Activated CD8-positive, alpha-beta T cell treated with anti-CD3 and anti-CD28 coated beads, Interleukin-2, amount 10 ng/mL, durations not matched to agents 7 days and 5 days (primary cell): ENCODE measurements at regions of chr12 and their contacts with region 1.

Region 1: DNA sequence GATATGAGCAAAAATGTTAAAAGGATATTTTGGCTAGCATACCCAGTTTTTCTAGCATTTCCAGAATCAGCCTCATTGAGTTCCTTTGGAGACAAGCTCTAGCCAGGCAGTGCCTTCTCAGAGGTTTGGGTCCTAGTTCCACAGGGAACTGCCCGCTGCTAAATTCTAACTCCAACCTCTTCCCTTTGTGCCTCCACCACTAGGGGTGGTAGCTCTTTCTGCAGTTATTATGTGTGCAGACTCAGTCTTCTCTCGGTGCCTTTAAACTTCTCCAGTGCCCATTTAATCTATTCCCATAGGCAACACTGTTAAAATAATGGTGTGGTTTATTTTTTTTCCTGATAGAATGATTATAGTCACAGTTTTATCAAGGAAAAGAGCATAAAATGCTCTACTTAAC is 21.5 kb upstream of the SLC25A3 start:
- DNase-seq: no peak
- ATAC-seq: no peak
- H3K4me3 Mint-ChIP-seq: no peak overlapping the region
- H3K27ac Mint-ChIP-seq: no peak overlapping the region
- H3K4me1 Mint-ChIP-seq: no peaks in the 10 kb centered on the region
- H3K27me3 Mint-ChIP-seq: no peaks in the 10 kb centered on the region

Region 2: GRCh38 chr12:98532681-98533304 is 39.2 kb before region 1 on chr12:
- CTCF ChIA-PET with region 1: interaction called, 11 read pairs
- POLR2A ChIA-PET with region 1: no interaction called
- DNase-seq: no peak
- ATAC-seq: peak; percentile 62
- H3K4me3 Mint-ChIP-seq: no peak overlapping the region
- H3K27ac Mint-ChIP-seq: no peak overlapping the region
- H3K4me1 Mint-ChIP-seq: peaks cover 21% of the 10 kb centered on the region
- H3K27me3 Mint-ChIP-seq: no peaks in the 10 kb centered on the region

Region 3: GRCh38 chr12:98587084-98587483 is 15.1 kb after region 1 on chr12:
- CTCF ChIA-PET with region 1: interaction called, 34 read pairs
- POLR2A ChIA-PET with region 1: no interaction called
- DNase-seq: no peak
- ATAC-seq: no peak
- H3K4me3 Mint-ChIP-seq: no peak overlapping the region
- H3K27ac Mint-ChIP-seq: no peak overlapping the region
- H3K4me1 Mint-ChIP-seq: no peaks in the 10 kb centered on the region
- H3K27me3 Mint-ChIP-seq: no peaks in the 10 kb centered on the region

Region 4: GRCh38 chr12:98644711-98645402 is 72.8 kb after region 1 on chr12 and contains the starts of genes APAF1 and IKBIP:
- CTCF ChIA-PET with region 1: interaction called, 58 read pairs
- POLR2A ChIA-PET with region 1: interaction called, 3 read pairs
- DNase-seq: peak; percentile 97
- ATAC-seq: peak; percentile 89
- H3K4me3 Mint-ChIP-seq: peak within 1 kb of the TSS; percentile 96
- H3K27ac Mint-ChIP-seq: peak within 1 kb of the TSS; percentile 98
- H3K4me1 Mint-ChIP-seq: peaks cover 41% of the 10 kb centered on the region
- H3K27me3 Mint-ChIP-seq: no peaks in the 10 kb centered on the region
- total RNA-seq, gene APAF1: 33.4 to 35.9 TPM
- total RNA-seq, gene IKBIP: 35.4 to 35.8 TPM

Region 5: GRCh38 chr12:98743347-98743953 is 171.4 kb after region 1 on chr12:
- CTCF ChIA-PET with region 1: interaction called, 11 read pairs
- POLR2A ChIA-PET with region 1: no interaction called
- DNase-seq: peak; percentile 55
- ATAC-seq: peak; percentile 50
- H3K4me3 Mint-ChIP-seq: no peak overlapping the region
- H3K27ac Mint-ChIP-seq: no peak overlapping the region
- H3K4me1 Mint-ChIP-seq: peaks cover 12% of the 10 kb centered on the region
- H3K27me3 Mint-ChIP-seq: peaks cover 27% of the 10 kb centered on the region